Calu3 (cell line): ENCODE measurements at regions of chr7 and their contacts with region 1.

Region 1: GRCh38 chr7:31553661-31554081 is 39.8 kb downstream of the ITPRID1 start:
- DNase-seq: no peak
- H3K4me3 Mint-ChIP-seq: no peak overlapping the region
- H3K27ac Mint-ChIP-seq: peak overlapping the region; percentile 71
- H3K4me1 Mint-ChIP-seq: peaks cover 22% of the 10 kb centered on the region
- H3K27me3 Mint-ChIP-seq: no peaks in the 10 kb centered on the region
- CTCF ChIP-seq: no peak

Region 2: GRCh38 chr7:31633894-31634494 is 80.3 kb after region 1 on chr7:
- CTCF ChIA-PET with region 1: no interaction called
- intact Hi-C with region 1: loop called (anchors 5 kb)
- DNase-seq: peak; percentile 83
- H3K4me3 Mint-ChIP-seq: no peak overlapping the region
- H3K27ac Mint-ChIP-seq: peak overlapping the region; percentile 44
- H3K4me1 Mint-ChIP-seq: peaks cover 28% of the 10 kb centered on the region
- H3K27me3 Mint-ChIP-seq: no peaks in the 10 kb centered on the region
- CTCF ChIP-seq: peak; percentile 92